ENCODE measurements at regions of chr6 and their contacts with region 1.

Region 1: DNA sequence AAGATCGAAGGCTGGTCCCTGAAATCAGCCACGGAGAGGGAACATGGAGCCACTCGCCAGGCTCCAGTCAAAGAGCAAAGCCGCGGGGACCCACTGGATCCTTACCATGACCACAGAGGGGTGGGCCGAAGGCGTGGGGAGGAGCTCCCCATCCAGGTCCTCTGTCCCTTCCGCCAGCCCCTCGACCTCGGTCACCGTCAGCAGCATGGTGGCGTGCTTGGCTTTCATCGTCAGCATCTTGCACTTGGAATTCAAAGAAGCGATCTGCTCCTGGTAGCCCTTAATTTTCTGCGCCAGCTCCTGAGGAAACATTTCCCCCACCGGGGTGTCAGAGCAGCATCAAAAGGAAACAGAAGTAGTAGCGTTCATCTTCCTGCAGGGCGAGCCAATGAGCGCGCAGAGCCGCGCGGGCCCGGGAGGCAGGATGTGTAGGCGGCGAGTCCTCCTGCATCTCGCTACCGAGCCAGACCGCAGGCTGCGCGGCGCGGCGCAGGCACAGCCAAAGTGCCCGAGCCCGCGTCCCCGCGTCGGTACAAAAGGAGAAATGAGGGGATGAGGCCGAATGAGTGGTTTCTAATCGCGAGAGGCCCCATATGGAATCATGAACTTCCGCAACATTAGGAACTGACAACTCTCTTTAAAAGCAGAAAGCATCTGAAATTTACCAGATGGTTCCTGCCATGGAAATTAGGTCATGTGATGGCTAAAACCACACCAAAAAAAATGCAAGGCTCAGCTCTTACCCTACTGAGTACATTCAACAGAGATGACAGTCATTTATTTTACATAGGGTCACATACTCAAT is 335.2 kb downstream of the SYNE1 start:
- DNase-seq: peak; percentile 82
- ATAC-seq: peak; percentile 98
- H3K4me3 ChIP-seq: peak overlapping the region; percentile 90
- H3K27ac ChIP-seq: peak overlapping the region; percentile 16; the same call in 1 of the 2 replicates
- H3K4me1 ChIP-seq: peaks cover 8% of the 10 kb centered on the region; the same call in 1 of the 2 replicates
- H3K27me3 ChIP-seq: no peaks in the 10 kb centered on the region
- CTCF ChIP-seq: peak; percentile 56

Region 2: DNA sequence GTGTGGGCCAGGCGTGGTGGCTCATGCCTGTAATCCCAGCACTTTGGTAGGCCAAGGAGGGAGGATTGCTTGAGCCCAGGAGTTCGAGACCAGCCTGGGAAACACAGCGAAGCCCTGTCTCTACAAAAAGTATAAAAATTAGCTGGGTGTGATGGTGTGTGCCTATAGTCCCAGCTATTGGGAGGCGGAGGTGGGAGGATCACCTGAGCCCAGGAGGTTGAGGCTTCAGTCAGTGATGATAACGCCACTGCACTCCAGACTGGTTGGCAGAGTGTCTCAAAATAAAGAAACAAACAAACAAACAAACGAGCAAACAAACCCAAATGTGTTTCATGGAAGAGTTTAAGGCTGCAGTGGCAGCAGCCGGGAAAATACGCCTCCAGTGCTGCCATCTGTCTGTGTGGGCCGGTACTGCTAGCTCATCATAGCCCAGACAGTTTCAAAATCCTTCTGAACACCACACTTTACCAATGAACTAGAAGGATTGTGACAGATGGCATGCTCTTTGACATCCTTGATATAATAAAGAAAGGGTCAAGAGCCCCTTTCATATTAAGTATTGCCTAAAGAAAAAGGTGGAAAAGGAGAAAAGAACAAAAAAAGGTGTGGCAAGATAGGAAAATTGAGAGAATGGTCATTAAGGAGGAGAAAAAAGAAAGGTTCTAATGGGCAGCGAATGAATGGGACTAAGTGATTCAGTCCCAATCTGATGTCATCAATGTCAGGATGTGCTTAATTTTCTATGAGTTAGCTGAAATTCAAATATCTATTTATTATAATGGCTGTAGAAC is 36.6 kb after region 1 on chr6:
- CTCF ChIA-PET with region 1: interaction called, 5 read pairs
- POLR2A ChIA-PET with region 1: no interaction called
- intact Hi-C with region 1: loop called (anchors 5 kb)
- DNase-seq: peak; percentile 50
- ATAC-seq: peak; percentile 59; the same call in 1 of the 2 replicates
- H3K4me3 ChIP-seq: no peak overlapping the region
- H3K27ac ChIP-seq: no peak overlapping the region
- H3K4me1 ChIP-seq: peaks cover 23% of the 10 kb centered on the region
- H3K27me3 ChIP-seq: no peaks in the 10 kb centered on the region
- CTCF ChIP-seq: peak; percentile 78

Region 3: DNA sequence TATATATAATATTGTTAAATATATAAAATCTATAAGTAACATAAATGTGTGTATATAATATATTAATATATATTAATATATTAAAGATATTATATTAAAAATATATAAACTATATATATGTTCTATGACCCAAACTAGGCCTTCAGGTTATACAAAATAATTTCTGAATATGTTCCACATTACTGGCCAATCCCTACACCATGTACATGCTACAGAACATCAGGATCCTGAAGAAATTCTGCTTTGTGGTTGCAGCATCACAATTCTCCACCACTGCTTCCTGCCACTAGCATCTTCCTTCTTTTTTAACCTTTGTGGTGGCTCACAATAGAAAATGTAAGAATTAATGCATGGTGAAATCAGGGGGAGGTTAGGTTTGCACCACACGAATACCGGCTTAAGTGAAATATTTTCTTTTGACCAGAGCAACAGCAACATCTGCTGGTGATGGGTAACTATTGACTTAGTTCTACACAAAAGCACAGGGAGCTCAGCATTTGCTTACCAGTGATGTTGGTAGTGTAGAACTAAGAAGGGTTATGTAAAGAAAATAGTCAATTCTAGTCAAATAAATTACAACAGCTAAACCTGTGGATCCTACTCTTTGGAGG is 54.6 kb after region 1 on chr6:
- CTCF ChIA-PET with region 1: no interaction called
- POLR2A ChIA-PET with region 1: no interaction called
- intact Hi-C with region 1: loop called (anchors 1 kb)
- DNase-seq: peak; percentile 62
- ATAC-seq: peak; percentile 67
- H3K4me3 ChIP-seq: no peak overlapping the region
- H3K27ac ChIP-seq: no peak overlapping the region
- H3K4me1 ChIP-seq: 0 out of 2 replicates have a peak, but pooled peaks cover 10% of the 10 kb centered on the region
- H3K27me3 ChIP-seq: no peaks in the 10 kb centered on the region
- CTCF ChIP-seq: peak; percentile 67

Measured in PC-3 (cell line).